Aorta (tissue), 5 donors: ENCODE measurements at regions of chr10 and their contacts with region 1.

Region 1: DNA sequence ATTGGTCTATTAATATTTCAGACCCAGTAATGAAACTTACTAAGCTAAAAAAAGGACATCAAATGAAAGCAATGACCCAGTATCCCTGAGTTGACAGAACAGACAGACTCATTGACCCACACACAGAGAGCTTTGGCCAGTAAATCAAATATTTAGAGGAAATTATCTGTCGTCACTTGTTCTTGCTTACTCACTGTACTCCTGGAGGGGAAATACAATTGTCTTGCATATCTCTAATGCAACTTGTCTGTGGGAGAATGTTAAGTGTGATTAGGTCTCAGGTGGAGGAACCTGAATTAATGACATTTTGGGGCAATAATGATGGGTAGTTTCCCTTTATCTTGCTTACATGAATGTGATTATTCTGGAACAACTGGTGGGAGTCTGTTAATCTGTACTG is 80.4 kb downstream of the CUBN start:
- DNase-seq: no peak
- ATAC-seq: no peak
- H3K4me3 ChIP-seq: no peak overlapping the region
- H3K27ac ChIP-seq: no peak overlapping the region
- H3K4me1 ChIP-seq: no peaks in the 10 kb centered on the region
- H3K27me3 ChIP-seq: no peaks in the 10 kb centered on the region

Region 2: GRCh38 chr10:16259726-16260125 is 789.5 kb before region 1 on chr10:
- intact Hi-C with region 1: no loop called
- DNase-seq: no peak
- ATAC-seq: no peak
- H3K4me3 ChIP-seq: no peak overlapping the region
- H3K27ac ChIP-seq: no peak overlapping the region
- H3K4me1 ChIP-seq: no peaks in the 10 kb centered on the region
- H3K27me3 ChIP-seq: no peaks in the 10 kb centered on the region

Region 3: DNA sequence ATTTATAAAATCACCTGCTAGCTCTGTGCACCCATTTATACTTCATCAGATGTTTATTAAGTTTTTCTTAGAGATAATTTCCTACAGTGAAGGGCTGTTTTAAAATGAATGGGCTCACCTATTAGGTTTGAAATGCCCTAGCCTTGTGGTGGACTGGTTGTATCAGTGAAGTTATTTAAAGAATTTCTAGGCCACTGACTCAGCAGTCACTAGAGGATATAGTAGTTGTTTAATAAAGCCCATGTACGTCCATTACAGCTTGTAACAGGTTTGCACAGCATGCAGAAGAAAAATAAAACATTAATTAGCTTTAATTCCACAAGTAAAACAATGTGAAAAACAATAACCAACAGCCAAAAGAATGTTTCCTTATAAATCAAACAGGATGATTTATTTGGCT is 360.0 kb before region 1 on chr10:
- intact Hi-C with region 1: loop called in 1 of 2 experiments (anchors 10 kb)
- DNase-seq: no peak
- ATAC-seq: no peak
- H3K4me3 ChIP-seq: no peak overlapping the region
- H3K27ac ChIP-seq: no peak overlapping the region
- H3K4me1 ChIP-seq: peaks cover 0 to 3% of the 10 kb centered on the region in 2 donors
- H3K27me3 ChIP-seq: no peaks in the 10 kb centered on the region